ENCODE measurements at regions of chr5 and their contacts with region 1.

Region 1: GRCh38 chr5:148179234-148179824 is 11.0 kb downstream of the SPINK14 start:
- DNase-seq: peak; percentile 25
- ATAC-seq: no peak
- H3K4me3 Mint-ChIP-seq: no peak overlapping the region
- H3K27ac Mint-ChIP-seq: no peak overlapping the region
- H3K4me1 Mint-ChIP-seq: no peaks in the 10 kb centered on the region
- H3K27me3 Mint-ChIP-seq: peaks cover 9% of the 10 kb centered on the region

Region 2: DNA sequence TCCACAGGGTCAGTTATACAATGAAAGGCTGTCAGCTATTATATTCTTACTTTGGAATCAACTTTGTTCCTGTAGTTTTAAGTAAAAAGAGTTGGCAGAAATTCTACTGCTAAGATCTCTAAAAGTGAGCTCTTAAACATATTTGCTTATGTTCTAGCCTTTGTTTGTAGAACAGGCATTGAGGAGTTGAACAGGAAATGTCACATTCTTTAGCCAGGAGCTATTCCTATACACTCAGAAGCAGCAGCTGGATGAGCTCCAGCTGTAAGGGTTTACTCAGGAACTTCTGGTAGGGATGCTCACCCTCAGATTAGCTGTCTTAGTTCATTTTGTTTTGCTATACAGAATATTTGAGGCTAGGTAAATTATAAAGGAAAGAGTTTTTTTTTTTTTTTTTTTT is 33.4 kb before region 1 on chr5:
- CTCF ChIA-PET with region 1: no interaction called
- POLR2A ChIA-PET with region 1: no interaction called
- DNase-seq: no peak
- ATAC-seq: no peak
- H3K4me3 Mint-ChIP-seq: no peak overlapping the region
- H3K27ac Mint-ChIP-seq: no peak overlapping the region
- H3K4me1 Mint-ChIP-seq: no peaks in the 10 kb centered on the region
- H3K27me3 Mint-ChIP-seq: peaks cover 6% of the 10 kb centered on the region

Region 3: GRCh38 chr5:148374692-148375360 is 195.5 kb after region 1 on chr5:
- CTCF ChIA-PET with region 1: interaction called, 12 read pairs
- POLR2A ChIA-PET with region 1: no interaction called
- DNase-seq: peak; percentile 39
- ATAC-seq: peak; percentile 65
- H3K4me3 Mint-ChIP-seq: no peak overlapping the region
- H3K27ac Mint-ChIP-seq: no peak overlapping the region
- H3K4me1 Mint-ChIP-seq: peaks cover 9% of the 10 kb centered on the region
- H3K27me3 Mint-ChIP-seq: no peaks in the 10 kb centered on the region